Caco-2 (cell line): ENCODE measurements at regions of chr12 and their contacts with region 1.

Region 1: GRCh38 chr12:124884587-124885438 is 21.1 kb upstream of the SCARB1 start:
- DNase-seq: peak; percentile 89 to 93
- H3K4me3 ChIP-seq: no peak overlapping the region
- H3K4me3 Mint-ChIP-seq: peak overlapping the region; percentile 71
- H3K27ac Mint-ChIP-seq: peak overlapping the region; percentile 97
- H3K4me1 ChIP-seq: peaks cover 47% of the 10 kb centered on the region
- H3K4me1 Mint-ChIP-seq: peaks cover 9% of the 10 kb centered on the region
- H3K27me3 ChIP-seq: no peaks in the 10 kb centered on the region
- H3K27me3 Mint-ChIP-seq: no peaks in the 10 kb centered on the region
- CTCF ChIP-seq: peak in 1 of 2 experiments; percentile 4

Region 2: GRCh38 chr12:124694846-124695497 is 189.8 kb before region 1 on chr12:
- CTCF ChIA-PET with region 1: no interaction called
- POLR2A ChIA-PET with region 1: no interaction called
- intact Hi-C with region 1: no loop called
- DNase-seq: no peak
- H3K4me3 ChIP-seq: no peak overlapping the region
- H3K4me3 Mint-ChIP-seq: no peak overlapping the region
- H3K27ac Mint-ChIP-seq: no peak overlapping the region
- H3K4me1 ChIP-seq: no peaks in the 10 kb centered on the region; the same call in 1 of the 2 replicates
- H3K4me1 Mint-ChIP-seq: peaks cover 12% of the 10 kb centered on the region
- H3K27me3 ChIP-seq: no peaks in the 10 kb centered on the region
- H3K27me3 Mint-ChIP-seq: no peaks in the 10 kb centered on the region
- CTCF ChIP-seq: no peak

Region 3: GRCh38 chr12:124829008-124829707 is 55.7 kb before region 1 on chr12:
- CTCF ChIA-PET with region 1: interaction called, 6 read pairs
- POLR2A ChIA-PET with region 1: no interaction called
- intact Hi-C with region 1: loop called (anchors 1 kb)
- DNase-seq: peak; percentile 86 to 93
- H3K4me3 ChIP-seq: no peak overlapping the region
- H3K4me3 Mint-ChIP-seq: peak overlapping the region; percentile 64
- H3K27ac Mint-ChIP-seq: peak overlapping the region; percentile 91
- H3K4me1 ChIP-seq: peaks cover 58% of the 10 kb centered on the region
- H3K4me1 Mint-ChIP-seq: peaks cover 41% of the 10 kb centered on the region
- H3K27me3 ChIP-seq: no peaks in the 10 kb centered on the region
- H3K27me3 Mint-ChIP-seq: no peaks in the 10 kb centered on the region
- CTCF ChIP-seq: no peak

Region 4: GRCh38 chr12:124863416-124864325 is 21.1 kb before region 1 on chr12 and contains the start of gene SCARB1:
- CTCF ChIA-PET with region 1: no interaction called
- POLR2A ChIA-PET with region 1: interaction called, 5 read pairs
- intact Hi-C with region 1: loop called (anchors 2 kb)
- DNase-seq: peak; percentile 86 to 92
- H3K4me3 ChIP-seq: peak within 1 kb of the TSS; percentile 94
- H3K4me3 Mint-ChIP-seq: peak within 1 kb of the TSS; percentile 95
- H3K27ac Mint-ChIP-seq: peak within 1 kb of the TSS; percentile 89
- H3K4me1 ChIP-seq: peaks cover 17% of the 10 kb centered on the region
- H3K4me1 Mint-ChIP-seq: peaks cover 38% of the 10 kb centered on the region
- H3K27me3 ChIP-seq: no peaks in the 10 kb centered on the region
- H3K27me3 Mint-ChIP-seq: no peaks in the 10 kb centered on the region
- CTCF ChIP-seq: peak; percentile 15 to 36
- total RNA-seq, gene SCARB1: 104 and 106 TPM in 2 replicates

Region 5: DNA sequence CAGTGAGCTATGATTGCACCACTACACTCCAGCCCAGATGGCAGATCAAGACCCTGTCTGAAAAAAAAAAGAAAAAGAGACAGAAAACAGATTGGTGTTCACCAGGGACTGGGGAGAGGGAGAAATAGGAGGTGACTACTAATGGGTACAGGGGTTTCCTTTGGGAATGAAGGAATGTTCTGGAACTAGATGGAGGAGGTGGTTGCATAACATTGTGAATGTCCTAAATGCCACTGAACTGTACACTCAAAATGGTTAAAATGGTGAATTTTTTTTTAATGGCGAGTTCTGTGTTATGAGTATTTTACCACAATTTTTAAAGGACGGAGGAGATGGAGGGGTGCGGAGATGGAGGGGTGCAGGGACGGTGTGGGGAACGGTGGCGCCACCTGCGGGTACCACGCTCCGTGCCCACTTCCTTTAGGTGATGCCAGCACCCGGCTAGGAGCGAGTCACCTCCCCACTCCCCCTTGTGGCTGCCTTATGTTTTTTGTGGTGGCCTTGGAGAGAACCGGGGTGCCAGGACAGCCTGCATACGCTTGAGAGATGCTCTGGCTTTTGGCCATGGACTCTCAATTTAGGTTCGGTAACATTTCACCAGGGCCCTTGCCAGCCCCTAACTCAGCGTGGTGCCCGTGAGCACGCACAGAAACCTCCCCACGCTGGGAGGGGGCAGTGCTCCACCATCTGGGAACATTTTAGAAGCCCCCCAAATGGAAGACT is 13.5 kb after region 1 on chr12:
- CTCF ChIA-PET with region 1: interaction called, 7 read pairs
- POLR2A ChIA-PET with region 1: interaction called, 7 read pairs
- intact Hi-C with region 1: loop called (anchors 1 kb)
- DNase-seq: peak; percentile 56 to 63
- H3K4me3 ChIP-seq: no peak overlapping the region
- H3K4me3 Mint-ChIP-seq: no peak overlapping the region
- H3K27ac Mint-ChIP-seq: peak overlapping the region; percentile 32
- H3K4me1 ChIP-seq: peaks cover 26% of the 10 kb centered on the region
- H3K4me1 Mint-ChIP-seq: peaks cover 18% of the 10 kb centered on the region
- H3K27me3 ChIP-seq: no peaks in the 10 kb centered on the region
- H3K27me3 Mint-ChIP-seq: no peaks in the 10 kb centered on the region
- CTCF ChIP-seq: peak; percentile 50 to 55

Region 6: GRCh38 chr12:124917135-124917840 is 32.5 kb after region 1 on chr12:
- CTCF ChIA-PET with region 1: interaction called, 3 read pairs
- POLR2A ChIA-PET with region 1: interaction called, 10 read pairs
- intact Hi-C with region 1: no loop called
- DNase-seq: peak; percentile 97 to 99
- H3K4me3 ChIP-seq: peak overlapping the region; percentile 31
- H3K4me3 Mint-ChIP-seq: peak overlapping the region; percentile 98
- H3K27ac Mint-ChIP-seq: peak overlapping the region; percentile 100
- H3K4me1 ChIP-seq: peaks cover 42% of the 10 kb centered on the region
- H3K4me1 Mint-ChIP-seq: peaks cover 49% of the 10 kb centered on the region
- H3K27me3 ChIP-seq: no peaks in the 10 kb centered on the region
- H3K27me3 Mint-ChIP-seq: peaks cover 9% of the 10 kb centered on the region
- CTCF ChIP-seq: no peak

Region 7: DNA sequence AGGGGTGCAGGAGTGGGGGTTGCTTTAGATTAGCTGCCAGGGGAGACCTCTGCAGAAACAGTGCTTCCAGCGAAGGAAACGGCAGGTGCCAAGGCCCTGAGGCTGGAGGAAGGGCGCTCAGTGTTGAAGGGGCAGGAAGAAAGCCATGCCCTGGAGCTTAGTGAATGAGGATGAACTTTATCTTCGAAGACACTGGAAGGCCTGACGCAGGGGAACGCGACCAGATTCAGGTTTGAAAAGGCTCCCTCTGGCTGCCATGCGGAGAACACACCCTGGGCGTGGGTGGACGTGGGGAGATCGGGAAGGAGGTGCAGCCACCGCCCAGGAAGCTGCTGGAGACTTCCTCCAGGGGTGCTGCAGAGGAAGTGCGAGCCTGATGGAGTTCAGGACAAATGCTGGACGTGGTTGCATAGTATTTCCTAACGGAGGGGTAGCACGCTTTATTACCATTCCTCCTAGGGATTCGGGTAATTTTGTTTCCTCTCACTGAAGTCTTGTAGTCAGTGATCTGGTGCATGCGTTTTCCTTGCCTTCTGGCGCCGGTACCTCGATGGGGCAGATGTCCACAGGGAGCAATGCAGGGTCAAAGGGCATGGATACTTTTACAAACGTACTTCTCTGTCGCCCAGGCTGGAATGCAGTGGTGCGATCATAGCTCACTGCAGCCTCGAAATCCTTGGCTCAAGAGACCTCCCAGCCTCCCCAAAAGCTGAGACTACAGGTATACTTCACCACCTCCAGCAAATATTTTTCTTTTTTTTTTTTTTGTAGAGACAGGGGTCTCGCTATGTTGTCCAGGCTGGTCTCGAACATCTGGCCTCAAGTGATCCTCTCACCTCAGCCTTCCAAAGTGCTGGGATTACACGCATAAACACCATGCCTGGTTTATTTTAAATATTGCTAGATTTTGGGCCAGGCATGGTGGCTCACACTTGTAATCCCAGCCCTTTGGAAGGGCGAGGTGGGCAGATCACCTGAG is 56.0 kb after region 1 on chr12:
- CTCF ChIA-PET with region 1: interaction called, 3 read pairs
- POLR2A ChIA-PET with region 1: no interaction called
- intact Hi-C with region 1: loop called (anchors 1 kb)
- DNase-seq: peak; percentile 94 to 96
- H3K4me3 ChIP-seq: peak overlapping the region; percentile 52
- H3K4me3 Mint-ChIP-seq: no peak overlapping the region
- H3K27ac Mint-ChIP-seq: no peak overlapping the region
- H3K4me1 ChIP-seq: no peaks in the 10 kb centered on the region
- H3K4me1 Mint-ChIP-seq: no peaks in the 10 kb centered on the region
- H3K27me3 ChIP-seq: no peaks in the 10 kb centered on the region
- H3K27me3 Mint-ChIP-seq: no peaks in the 10 kb centered on the region
- CTCF ChIP-seq: peak; percentile 83 to 92

Region 8: DNA sequence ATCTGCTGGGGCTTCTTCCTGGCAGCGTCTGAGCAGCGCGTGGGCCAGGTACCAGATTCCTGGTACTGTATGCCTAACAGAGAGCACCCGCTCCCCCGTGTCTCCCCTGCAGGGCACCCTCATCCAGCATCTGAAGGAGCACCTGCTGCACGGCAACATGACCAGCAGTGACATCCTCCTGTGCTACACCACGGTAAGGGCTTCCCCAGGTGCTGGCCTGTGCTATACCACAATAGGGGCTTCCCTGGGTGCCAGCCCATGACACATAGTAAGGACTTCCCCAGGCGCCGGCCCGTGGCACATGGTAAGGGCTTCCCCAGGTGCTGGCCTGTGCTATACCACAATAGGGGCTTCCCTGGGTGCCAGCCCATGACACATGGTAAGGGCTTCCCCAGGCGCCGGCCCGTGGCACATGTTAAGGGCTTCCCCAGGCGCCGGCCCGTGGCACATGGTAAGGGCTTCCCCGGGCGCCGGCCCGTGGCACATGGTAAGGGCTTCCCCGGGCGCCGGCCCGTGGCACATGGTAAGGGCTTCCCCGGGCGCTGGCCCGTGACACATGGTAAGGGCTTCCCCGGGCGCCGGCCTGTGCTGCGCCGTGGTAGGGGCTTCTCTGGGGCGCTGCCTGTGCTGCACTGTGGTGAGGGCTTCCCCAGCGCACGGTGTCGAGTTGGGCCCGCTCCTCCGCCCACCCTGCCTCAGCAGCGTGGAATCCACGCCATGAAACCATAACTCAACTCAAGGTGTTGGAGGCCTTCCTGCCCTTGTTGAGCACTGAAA is 229.7 kb after region 1 on chr12:
- CTCF ChIA-PET with region 1: no interaction called
- POLR2A ChIA-PET with region 1: no interaction called
- intact Hi-C with region 1: no loop called
- DNase-seq: no peak
- H3K4me3 ChIP-seq: no peak overlapping the region
- H3K4me3 Mint-ChIP-seq: no peak overlapping the region
- H3K27ac Mint-ChIP-seq: no peak overlapping the region
- H3K4me1 ChIP-seq: no peaks in the 10 kb centered on the region
- H3K4me1 Mint-ChIP-seq: no peaks in the 10 kb centered on the region
- H3K27me3 ChIP-seq: no peaks in the 10 kb centered on the region
- H3K27me3 Mint-ChIP-seq: no peaks in the 10 kb centered on the region
- CTCF ChIP-seq: no peak